GM10248 (cell line): ENCODE measurements at regions of chr3 and their contacts with region 1.

Region 1: GRCh38 chr3:16258866-16259265 is 5.9 kb downstream of the DPH3 start:
- DNase-seq: no peak
- CTCF ChIP-seq: no peak

Region 2: GRCh38 chr3:16247276-16248061 is 11.4 kb before region 1 on chr3:
- CTCF ChIA-PET with region 1: interaction called, 13 read pairs
- POLR2A ChIA-PET with region 1: no interaction called
- DNase-seq: peak; percentile 78
- CTCF ChIP-seq: peak; percentile 94